ENCODE measurements at regions of chr15 and their contacts with region 1.

Region 1: GRCh38 chr15:35289024-35289617 is 204.0 kb upstream of the NANOGP8 start:
- DNase-seq: no peak
- H3K4me3 ChIP-seq: no peak overlapping the region
- H3K27ac ChIP-seq: no peak overlapping the region
- H3K4me1 ChIP-seq: peaks cover 0 to 20% (median 7%) of the 10 kb centered on the region in 4 donors
- H3K27me3 ChIP-seq: no peaks in the 10 kb centered on the region
- CTCF ChIP-seq: peak; percentile 69 to 77 (median 77)
- EP300 ChIP-seq: no peak
- POLR2A ChIP-seq: no peak

Region 2: GRCh38 chr15:34650177-34650576 is 638.9 kb before region 1 on chr15:
- intact Hi-C with region 1: no loop called
- DNase-seq: no peak
- H3K4me3 ChIP-seq: no peak overlapping the region
- H3K27ac ChIP-seq: no peak overlapping the region
- H3K4me1 ChIP-seq: no peaks in the 10 kb centered on the region
- H3K27me3 ChIP-seq: no peaks in the 10 kb centered on the region
- CTCF ChIP-seq: no peak
- EP300 ChIP-seq: no peak
- POLR2A ChIP-seq: no peak

Region 3: DNA sequence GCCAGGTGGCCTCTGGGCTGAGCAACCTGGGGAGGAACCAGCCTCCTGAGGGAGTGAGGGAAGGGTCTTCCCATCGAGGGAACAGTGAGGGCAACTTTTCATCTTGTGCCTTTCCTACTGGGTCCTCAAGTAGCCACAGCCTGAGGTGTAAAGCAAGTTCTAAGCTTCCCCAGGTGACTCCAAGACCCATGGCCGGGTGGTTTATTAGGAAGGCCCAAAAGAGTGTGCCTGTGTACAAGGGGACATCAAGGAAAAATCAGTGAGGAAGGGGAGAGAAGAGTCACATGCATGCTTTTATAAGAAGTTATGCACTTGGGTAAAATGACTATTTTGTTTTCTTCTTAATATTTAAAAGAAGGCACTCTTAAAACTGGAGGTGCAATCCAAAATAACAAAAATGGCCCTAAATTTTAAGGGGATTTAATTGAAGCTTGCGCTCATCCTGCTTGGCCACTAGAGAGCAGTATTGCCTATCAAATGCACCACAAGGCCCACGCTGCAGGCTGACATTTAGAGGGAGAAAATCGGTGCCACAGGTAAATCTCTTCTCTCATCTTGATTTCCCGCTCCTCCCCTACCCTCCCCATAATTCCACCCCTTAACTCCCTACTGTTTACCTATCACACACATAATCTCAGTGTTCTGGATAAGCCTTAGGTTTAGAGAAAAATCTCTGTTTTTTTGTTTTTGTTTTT is 210.8 kb before region 1 on chr15:
- intact Hi-C with region 1: loop called (anchors 5 kb)
- DNase-seq: no peak
- H3K4me3 ChIP-seq: no peak overlapping the region
- H3K27ac ChIP-seq: no peak overlapping the region
- H3K4me1 ChIP-seq: peaks cover 0 to 23% (median 21%) of the 10 kb centered on the region in 4 donors
- H3K27me3 ChIP-seq: no peaks in the 10 kb centered on the region
- CTCF ChIP-seq: peak; percentile 82 to 85 (median 84)
- EP300 ChIP-seq: no peak
- POLR2A ChIP-seq: no peak

Region 4: DNA sequence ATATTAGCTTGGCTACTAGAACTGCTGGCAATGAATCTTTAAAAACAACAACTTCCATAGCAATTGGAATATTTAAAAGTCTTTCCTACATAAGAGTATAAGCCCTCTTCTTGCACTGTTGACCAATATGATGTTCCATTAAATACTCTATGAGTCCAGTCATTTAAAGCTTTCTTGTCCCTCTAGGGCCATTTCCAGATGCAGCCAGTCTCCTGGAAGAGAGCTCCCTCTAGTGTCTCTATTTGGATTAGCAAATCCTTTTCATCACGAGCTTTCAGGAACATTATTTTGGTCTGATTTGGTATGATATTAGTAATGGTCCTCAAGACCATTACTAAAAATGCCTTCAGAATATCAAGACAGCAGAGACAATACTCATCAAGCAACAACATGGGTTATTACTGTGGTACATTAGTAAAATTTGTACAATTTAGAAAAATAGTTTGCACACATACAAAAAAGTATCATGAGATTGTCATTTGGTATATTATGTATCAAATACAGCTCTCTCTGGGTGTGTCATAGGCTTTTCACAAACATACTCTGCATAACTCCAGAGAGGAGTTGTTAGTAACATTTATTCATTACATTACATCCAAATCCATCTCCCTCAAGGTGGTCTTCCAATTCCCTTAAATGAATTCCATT is 155.6 kb after region 1 on chr15:
- intact Hi-C with region 1: loop called (anchors 2 kb)
- DNase-seq: no peak
- H3K4me3 ChIP-seq: no peak overlapping the region
- H3K27ac ChIP-seq: no peak overlapping the region
- H3K4me1 ChIP-seq: peaks cover 0 to 6% (median 5%) of the 10 kb centered on the region in 4 donors
- H3K27me3 ChIP-seq: no peaks in the 10 kb centered on the region
- CTCF ChIP-seq: peak; percentile 62 to 79 (median 75)
- EP300 ChIP-seq: no peak
- POLR2A ChIP-seq: no peak